ENCODE measurements at regions of chr5 and their contacts with region 1.

Region 1: GRCh38 chr5:10756549-10756948 is 4.5 kb downstream of the DAP start:
- DNase-seq: peak; percentile 76
- H3K4me3 ChIP-seq: no peak overlapping the region
- CTCF ChIP-seq: no peak

Region 2: GRCh38 chr5:10844016-10844415 is 87.5 kb after region 1 on chr5:
- in situ Hi-C with region 1: no loop called
- DNase-seq: no peak
- H3K4me3 ChIP-seq: no peak overlapping the region
- CTCF ChIP-seq: no peak

Region 3: DNA sequence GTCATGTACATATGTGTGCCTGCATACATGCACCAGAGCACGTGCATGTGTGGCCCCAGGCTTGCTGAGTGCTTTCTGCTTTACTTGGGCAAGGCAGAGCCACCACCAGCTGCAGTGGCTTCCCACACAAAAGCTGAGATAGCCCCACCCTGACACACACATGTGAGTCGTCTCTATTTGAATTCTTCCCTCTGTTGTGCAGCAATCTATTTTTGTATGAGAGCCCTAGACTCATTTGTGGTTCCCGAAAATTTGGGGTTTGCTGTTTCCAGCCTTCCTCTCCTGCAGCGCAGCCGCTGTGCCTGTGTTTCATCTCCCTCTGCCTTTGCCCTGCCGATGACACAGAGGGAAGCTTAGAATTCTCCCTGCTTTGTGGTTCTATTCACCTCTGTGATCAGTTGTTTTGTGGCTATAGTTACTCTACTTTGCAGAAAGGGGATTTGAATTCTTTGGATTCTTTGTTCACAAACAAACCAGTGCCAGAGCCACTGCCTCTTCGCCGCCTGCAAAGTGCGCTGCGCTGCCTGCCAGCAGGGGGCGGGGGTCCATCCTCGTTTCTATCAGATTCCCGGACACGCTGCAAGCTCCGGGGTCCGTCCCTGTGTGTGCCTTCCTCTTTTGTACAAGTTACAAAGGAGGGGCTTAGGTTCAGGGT is 100.3 kb after region 1 on chr5:
- in situ Hi-C with region 1: loop called (anchors 10 kb)
- DNase-seq: peak; percentile 85
- H3K4me3 ChIP-seq: no peak overlapping the region
- CTCF ChIP-seq: peak; percentile 98

Measured in astrocyte of the cerebellum (primary cell).